Right ventricle myocardium inferior (tissue), 1 donor: ENCODE measurements at regions of chr16 and their contacts with region 1.

Region 1: GRCh38 chr16:13997933-13998332 is 73.2 kb upstream of the MRTFB start:
- DNase-seq: no peak
- ATAC-seq: no peak

Region 2: DNA sequence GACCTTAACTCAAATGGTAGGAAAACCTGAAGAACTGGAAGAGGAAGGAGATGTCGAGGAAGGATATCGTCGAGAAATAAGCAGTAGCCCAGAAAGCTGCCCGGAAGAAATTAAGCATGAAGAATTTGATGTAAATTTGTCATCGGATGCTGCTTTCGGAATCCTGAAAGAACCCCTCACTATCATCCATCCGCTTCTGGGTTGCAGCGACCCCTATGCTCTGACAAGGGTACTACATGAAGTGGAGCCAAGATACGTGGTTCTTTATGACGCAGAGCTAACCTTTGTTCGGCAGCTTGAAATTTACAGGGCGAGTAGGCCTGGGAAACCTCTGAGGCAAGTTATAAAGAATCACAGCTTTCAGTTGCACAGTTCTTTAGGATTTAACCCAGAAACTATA is 62.5 kb before region 1 on chr16:
- intact Hi-C with region 1: loop called (anchors 5 kb)
- DNase-seq: no peak
- ATAC-seq: no peak

Region 3: GRCh38 chr16:14070877-14071575 is 73.1 kb after region 1 on chr16 and contains the start of gene MRTFB:
- intact Hi-C with region 1: loop called (anchors 5 kb)
- DNase-seq: peak; percentile 89
- ATAC-seq: peak; percentile 89
- total RNA-seq, gene MRTFB: 23.8 TPM

Region 4: GRCh38 chr16:14088155-14088753 is 90.3 kb after region 1 on chr16:
- intact Hi-C with region 1: loop called (anchors 5 kb)
- DNase-seq: no peak
- ATAC-seq: peak; percentile 75

Region 5: GRCh38 chr16:14151256-14152030 is 153.5 kb after region 1 on chr16:
- intact Hi-C with region 1: no loop called
- DNase-seq: no peak
- ATAC-seq: peak; percentile 62